PC-9 (cell line): ENCODE measurements at regions of chr1 and their contacts with region 1.

Region 1: GRCh38 chr1:112390775-112391602 is 5.0 kb upstream of the CTTNBP2NL start:
- DNase-seq: peak; percentile 86 to 88
- H3K4me3 ChIP-seq: peak overlapping the region; percentile 30; the same call in 1 of the 2 replicates
- H3K27ac ChIP-seq: no peak overlapping the region
- H3K4me1 ChIP-seq: peaks cover 28% of the 10 kb centered on the region
- H3K27me3 ChIP-seq: no peaks in the 10 kb centered on the region
- CTCF ChIP-seq: peak; percentile 98

Region 2: GRCh38 chr1:112251766-112252506 is 139.1 kb before region 1 on chr1:
- CTCF ChIA-PET with region 1: no interaction called
- POLR2A ChIA-PET with region 1: no interaction called
- intact Hi-C with region 1: no loop called
- DNase-seq: peak; percentile 66 to 76
- H3K4me3 ChIP-seq: no peak overlapping the region
- H3K27ac ChIP-seq: peak overlapping the region; percentile 60
- H3K4me1 ChIP-seq: peaks cover 16% of the 10 kb centered on the region; the same call in 1 of the 2 replicates
- H3K27me3 ChIP-seq: peaks cover 17% of the 10 kb centered on the region; the same call in 1 of the 2 replicates
- CTCF ChIP-seq: no peak

Region 3: DNA sequence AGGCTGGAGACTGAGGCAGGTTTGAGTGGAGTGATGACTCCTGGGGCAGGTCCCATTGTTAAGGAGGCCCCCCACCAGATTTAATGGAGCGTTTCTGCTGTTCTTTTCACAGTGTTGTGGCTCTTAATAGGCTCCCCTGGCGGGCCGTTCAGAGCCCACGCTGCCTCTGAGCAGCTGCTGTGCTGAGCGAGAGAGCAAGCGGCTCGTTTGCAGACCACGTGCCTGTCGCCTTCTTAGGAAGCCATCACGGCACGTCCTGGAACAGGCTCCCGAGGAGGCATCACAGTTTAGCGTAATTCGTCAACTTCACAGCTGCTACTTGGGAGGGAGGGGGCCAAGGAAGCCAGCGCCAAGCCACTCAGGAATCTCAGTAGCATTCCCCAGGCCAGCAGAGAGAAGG is 65.5 kb before region 1 on chr1:
- CTCF ChIA-PET with region 1: no interaction called
- POLR2A ChIA-PET with region 1: no interaction called
- intact Hi-C with region 1: no loop called
- DNase-seq: no peak
- H3K4me3 ChIP-seq: no peak overlapping the region
- H3K27ac ChIP-seq: no peak overlapping the region
- H3K4me1 ChIP-seq: no peaks in the 10 kb centered on the region
- H3K27me3 ChIP-seq: peaks cover 100% of the 10 kb centered on the region
- CTCF ChIP-seq: no peak

Region 4: DNA sequence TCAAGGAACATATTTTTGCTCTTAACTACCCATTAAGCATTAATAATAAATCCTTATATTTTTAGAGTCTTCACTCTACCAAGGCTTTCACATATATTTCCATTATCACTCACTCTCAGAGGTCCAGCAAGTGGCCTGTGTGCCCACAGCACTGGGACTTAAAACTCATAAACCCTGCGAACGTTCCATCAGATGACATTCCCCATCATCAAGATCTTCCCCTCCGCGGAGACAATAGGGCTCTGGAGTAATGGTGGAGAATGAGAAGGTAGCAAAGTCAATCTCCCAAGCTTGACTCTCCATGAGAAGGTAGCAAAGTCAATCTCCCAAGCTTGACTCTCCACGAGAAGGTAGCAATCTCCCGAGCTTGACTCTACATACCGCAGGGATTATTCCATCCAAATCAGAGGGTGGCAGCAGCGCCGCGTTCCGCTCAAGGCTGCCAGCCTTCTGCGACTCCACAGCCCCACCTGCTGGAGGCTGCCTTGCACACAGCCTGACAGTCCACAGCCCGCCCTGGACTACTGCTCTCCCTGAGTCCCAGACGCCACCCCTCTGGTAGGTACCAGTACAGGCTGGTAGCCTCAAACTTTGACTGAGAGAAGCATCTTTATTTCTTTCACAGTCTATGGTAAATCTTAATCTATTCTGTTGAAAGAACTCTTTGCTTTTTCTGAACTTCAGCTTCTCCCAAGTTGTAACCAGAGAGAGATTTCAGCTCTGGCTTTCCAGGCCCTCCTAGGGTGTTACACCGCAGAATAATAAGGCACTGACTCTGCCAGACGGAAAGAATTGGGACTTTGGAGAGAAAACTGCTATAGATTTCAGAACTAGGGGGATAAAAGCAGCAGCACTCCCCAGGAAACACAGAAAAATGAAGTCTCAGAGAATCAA is 21.4 kb before region 1 on chr1:
- CTCF ChIA-PET with region 1: no interaction called
- POLR2A ChIA-PET with region 1: interaction called, 18 read pairs
- intact Hi-C with region 1: no loop called
- DNase-seq: peak; percentile 67 to 88
- H3K4me3 ChIP-seq: no peak overlapping the region
- H3K27ac ChIP-seq: no peak overlapping the region
- H3K4me1 ChIP-seq: no peaks in the 10 kb centered on the region
- H3K27me3 ChIP-seq: peaks cover 55% of the 10 kb centered on the region
- CTCF ChIP-seq: peak; percentile 99

Region 5: GRCh38 chr1:112517231-112517630 is 126.2 kb after region 1 on chr1:
- CTCF ChIA-PET with region 1: no interaction called
- POLR2A ChIA-PET with region 1: no interaction called
- intact Hi-C with region 1: no loop called
- DNase-seq: no peak
- H3K4me3 ChIP-seq: no peak overlapping the region
- H3K27ac ChIP-seq: no peak overlapping the region
- H3K4me1 ChIP-seq: peaks cover 18% of the 10 kb centered on the region
- H3K27me3 ChIP-seq: no peaks in the 10 kb centered on the region
- CTCF ChIP-seq: no peak

Region 6: GRCh38 chr1:112557385-112557784 is 166.4 kb after region 1 on chr1:
- CTCF ChIA-PET with region 1: no interaction called
- POLR2A ChIA-PET with region 1: no interaction called
- intact Hi-C with region 1: no loop called
- DNase-seq: no peak
- H3K4me3 ChIP-seq: no peak overlapping the region
- H3K27ac ChIP-seq: peak overlapping the region; percentile 3; the same call in 1 of the 2 replicates
- H3K4me1 ChIP-seq: no peaks in the 10 kb centered on the region; the same call in 1 of the 2 replicates
- H3K27me3 ChIP-seq: no peaks in the 10 kb centered on the region
- CTCF ChIP-seq: no peak

Region 7: DNA sequence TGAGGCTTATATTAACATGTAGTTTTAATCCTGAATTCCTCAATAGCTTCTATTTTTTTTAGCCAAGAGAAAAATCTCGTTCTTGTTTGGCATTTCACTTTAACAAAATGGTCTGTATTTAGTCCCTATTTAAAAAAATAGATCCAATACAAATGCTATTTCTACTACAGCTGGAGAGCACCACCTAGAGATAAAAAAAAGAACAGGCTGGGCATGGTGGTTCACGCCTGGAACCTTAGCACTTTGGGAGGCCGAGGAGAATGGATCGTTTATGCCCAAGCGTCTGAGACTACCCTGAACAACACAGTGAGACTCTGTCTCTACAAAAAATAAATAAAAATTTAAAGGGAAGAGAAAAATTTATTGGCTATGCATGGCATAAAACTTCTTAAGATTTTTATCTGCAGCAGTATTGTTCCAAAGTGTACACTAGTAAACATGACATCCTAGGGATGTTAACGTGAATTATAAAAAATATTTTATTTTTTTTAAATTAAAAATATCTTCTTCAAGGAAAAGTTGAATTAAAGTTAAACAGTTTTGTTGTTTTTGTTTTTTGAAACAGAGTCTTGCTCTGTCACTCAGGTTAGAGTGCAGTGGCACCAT is 223.6 kb after region 1 on chr1:
- CTCF ChIA-PET with region 1: interaction called, 6 read pairs
- POLR2A ChIA-PET with region 1: interaction called, 5 read pairs
- intact Hi-C with region 1: loop called (anchors 1 kb)
- DNase-seq: peak in 1 of 2 experiments; percentile 14
- H3K4me3 ChIP-seq: no peak overlapping the region
- H3K27ac ChIP-seq: no peak overlapping the region
- H3K4me1 ChIP-seq: peaks cover 13% of the 10 kb centered on the region
- H3K27me3 ChIP-seq: no peaks in the 10 kb centered on the region
- CTCF ChIP-seq: peak; percentile 87

Region 8: DNA sequence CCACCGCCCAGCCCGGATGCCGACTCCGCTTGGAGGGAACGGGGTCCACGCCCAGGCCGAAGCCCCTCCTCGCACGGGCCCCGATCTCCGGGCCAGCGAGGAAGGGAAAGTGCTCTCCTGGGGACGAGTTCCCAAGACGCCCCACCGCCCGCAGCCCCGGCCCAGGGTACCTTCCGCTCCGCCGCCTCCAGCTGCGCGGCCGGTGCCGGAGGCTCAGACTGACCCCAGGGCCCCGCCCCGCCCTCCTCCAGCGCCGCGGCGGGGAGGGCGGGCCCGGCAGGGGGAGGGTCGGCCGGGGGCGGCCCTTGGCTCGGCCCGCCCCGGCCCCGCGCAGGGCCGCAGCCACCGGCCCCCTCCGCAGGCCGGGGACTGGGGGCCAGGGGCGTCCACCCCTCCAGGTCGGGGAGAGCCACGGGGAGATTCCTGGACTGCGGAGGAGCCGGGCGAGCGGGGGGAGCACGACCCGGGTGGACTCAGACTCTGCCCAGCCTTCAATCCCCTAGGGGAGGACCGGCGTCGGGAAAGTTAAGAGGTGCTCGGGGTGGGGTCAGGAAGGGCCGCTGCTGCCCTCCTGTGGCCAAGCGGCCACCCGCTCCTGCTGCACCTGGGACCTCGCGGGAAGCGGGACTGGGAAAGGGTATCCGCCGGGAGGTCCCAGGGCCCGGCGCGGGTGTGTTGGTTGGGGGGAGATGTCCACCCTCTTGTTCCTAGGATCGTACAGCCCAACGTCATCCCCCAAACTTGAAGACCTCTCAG is 316.1 kb after region 1 on chr1 and contains the start of gene RHOC:
- CTCF ChIA-PET with region 1: interaction called, 11 read pairs
- POLR2A ChIA-PET with region 1: interaction called, 5 read pairs
- intact Hi-C with region 1: loop called (anchors 2 kb)
- DNase-seq: peak; percentile 84 to 90
- H3K4me3 ChIP-seq: peak within 1 kb of the TSS; percentile 87
- H3K27ac ChIP-seq: peak within 1 kb of the TSS; percentile 89
- H3K4me1 ChIP-seq: peaks cover 41% of the 10 kb centered on the region
- H3K27me3 ChIP-seq: no peaks in the 10 kb centered on the region
- CTCF ChIP-seq: peak; percentile 93
- total RNA-seq, gene RHOC: 200 and 220 TPM in 2 replicates

Region 9: DNA sequence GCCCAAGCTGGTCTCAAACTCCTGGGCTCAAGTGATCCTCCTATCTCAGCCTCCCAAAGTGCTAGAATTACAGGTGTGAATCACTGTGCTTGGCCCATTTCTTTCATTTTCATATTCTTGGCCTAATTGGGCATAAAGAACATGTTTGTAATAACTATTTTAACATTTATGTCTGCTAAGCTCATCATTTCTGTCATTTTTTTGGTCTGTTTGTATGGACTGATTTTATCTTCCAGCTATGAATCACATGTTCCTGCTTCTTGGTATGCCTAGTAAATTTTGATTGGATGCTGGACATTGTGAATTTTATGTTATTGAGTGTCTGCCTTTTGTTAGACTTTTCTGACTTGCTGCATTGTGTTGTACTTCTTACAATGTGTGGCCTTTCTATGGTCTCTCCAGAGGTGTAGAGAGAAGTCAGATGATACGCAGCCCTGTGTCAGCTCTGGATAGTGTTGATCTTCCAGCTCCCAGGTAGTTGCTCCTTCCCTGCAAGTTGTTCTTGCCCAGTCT is 363.2 kb after region 1 on chr1:
- CTCF ChIA-PET with region 1: no interaction called
- POLR2A ChIA-PET with region 1: interaction called, 17 read pairs
- intact Hi-C with region 1: no loop called
- DNase-seq: no peak
- H3K4me3 ChIP-seq: no peak overlapping the region
- H3K27ac ChIP-seq: no peak overlapping the region
- H3K4me1 ChIP-seq: no peaks in the 10 kb centered on the region
- H3K27me3 ChIP-seq: no peaks in the 10 kb centered on the region
- CTCF ChIP-seq: no peak

Region 10: DNA sequence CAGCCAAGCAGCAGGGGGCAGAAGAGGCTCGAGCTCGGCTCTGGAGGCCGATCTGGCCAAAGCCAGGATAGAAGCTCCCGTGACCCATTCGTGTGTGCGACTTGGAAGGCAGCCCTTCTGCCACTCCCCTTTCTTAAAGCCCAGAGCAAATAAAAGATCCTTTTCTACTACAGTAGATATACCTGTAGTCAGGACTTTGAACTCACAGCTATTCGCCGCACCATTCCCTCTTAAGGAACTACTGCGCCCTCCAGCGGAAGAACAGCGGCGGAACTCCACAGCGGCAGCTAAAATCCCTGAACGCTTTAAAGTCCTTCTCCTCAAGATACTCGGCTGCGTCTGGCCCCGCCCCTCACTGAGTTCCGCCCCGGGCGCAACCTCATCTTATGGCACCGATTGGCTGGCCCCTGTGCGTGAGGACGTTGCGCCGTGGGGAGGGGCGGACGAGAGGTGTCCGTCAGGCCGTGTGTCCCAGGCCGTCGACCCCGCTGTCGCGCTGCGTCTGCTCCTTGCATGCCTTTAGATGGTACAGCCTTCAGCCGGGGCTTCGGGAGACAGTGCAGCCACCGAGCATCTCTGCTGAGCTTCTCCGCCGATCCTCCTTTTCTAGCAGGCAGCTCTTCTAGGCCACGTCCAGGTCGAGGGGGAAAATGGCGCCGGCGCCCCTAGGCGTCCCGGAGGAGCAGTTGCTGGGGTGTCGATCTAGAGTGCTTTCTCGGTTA is 681.9 kb after region 1 on chr1 and contains the start of gene LRIG2:
- CTCF ChIA-PET with region 1: interaction called, 3 read pairs
- POLR2A ChIA-PET with region 1: no interaction called
- intact Hi-C with region 1: loop called (anchors 2 kb)
- DNase-seq: peak; percentile 99
- H3K4me3 ChIP-seq: peak within 1 kb of the TSS; percentile 85
- H3K27ac ChIP-seq: peak within 1 kb of the TSS; percentile 78
- H3K4me1 ChIP-seq: peaks cover 20% of the 10 kb centered on the region
- H3K27me3 ChIP-seq: no peaks in the 10 kb centered on the region
- CTCF ChIP-seq: peak; percentile 94
- total RNA-seq, gene LRIG2: 9.4 and 10.6 TPM in 2 replicates

Region 11: GRCh38 chr1:113677250-113678158 is 1286.5 kb after region 1 on chr1:
- CTCF ChIA-PET with region 1: no interaction called
- POLR2A ChIA-PET with region 1: no interaction called
- intact Hi-C with region 1: loop called (anchors 5 kb)
- DNase-seq: peak in 1 of 2 experiments; percentile 59
- H3K4me3 ChIP-seq: no peak overlapping the region
- H3K27ac ChIP-seq: no peak overlapping the region
- H3K4me1 ChIP-seq: peaks cover 17% of the 10 kb centered on the region
- H3K27me3 ChIP-seq: no peaks in the 10 kb centered on the region
- CTCF ChIP-seq: peak; percentile 97